RWPE1 (cell line): ENCODE measurements at regions of chr1 and their contacts with region 1.

Region 1: GRCh38 chr1:39196244-39197215 is 8.0 kb upstream of the MACF1 start:
- DNase-seq: no peak
- H3K27ac ChIP-seq: no peak overlapping the region
- CTCF ChIP-seq: no peak

Region 2: GRCh38 chr1:39142401-39143151 is 54.0 kb before region 1 on chr1:
- CTCF ChIA-PET with region 1: interaction called, 13 read pairs
- POLR2A ChIA-PET with region 1: no interaction called
- DNase-seq: peak; percentile 84
- H3K27ac ChIP-seq: peak overlapping the region; percentile 63
- CTCF ChIP-seq: no peak

Region 3: GRCh38 chr1:39178541-39179431 is 17.7 kb before region 1 on chr1:
- CTCF ChIA-PET with region 1: no interaction called
- POLR2A ChIA-PET with region 1: no interaction called
- DNase-seq: peak; percentile 83
- H3K27ac ChIP-seq: peak overlapping the region; percentile 71
- CTCF ChIP-seq: no peak

Region 4: GRCh38 chr1:39258146-39258924 is 61.8 kb after region 1 on chr1:
- CTCF ChIA-PET with region 1: interaction called, 44 read pairs
- POLR2A ChIA-PET with region 1: no interaction called
- DNase-seq: peak; percentile 86
- H3K27ac ChIP-seq: no peak overlapping the region
- CTCF ChIP-seq: peak; percentile 89